GM12878 (cell line): ENCODE measurements at regions of chr14 and their contacts with region 1.

Region 1: DNA sequence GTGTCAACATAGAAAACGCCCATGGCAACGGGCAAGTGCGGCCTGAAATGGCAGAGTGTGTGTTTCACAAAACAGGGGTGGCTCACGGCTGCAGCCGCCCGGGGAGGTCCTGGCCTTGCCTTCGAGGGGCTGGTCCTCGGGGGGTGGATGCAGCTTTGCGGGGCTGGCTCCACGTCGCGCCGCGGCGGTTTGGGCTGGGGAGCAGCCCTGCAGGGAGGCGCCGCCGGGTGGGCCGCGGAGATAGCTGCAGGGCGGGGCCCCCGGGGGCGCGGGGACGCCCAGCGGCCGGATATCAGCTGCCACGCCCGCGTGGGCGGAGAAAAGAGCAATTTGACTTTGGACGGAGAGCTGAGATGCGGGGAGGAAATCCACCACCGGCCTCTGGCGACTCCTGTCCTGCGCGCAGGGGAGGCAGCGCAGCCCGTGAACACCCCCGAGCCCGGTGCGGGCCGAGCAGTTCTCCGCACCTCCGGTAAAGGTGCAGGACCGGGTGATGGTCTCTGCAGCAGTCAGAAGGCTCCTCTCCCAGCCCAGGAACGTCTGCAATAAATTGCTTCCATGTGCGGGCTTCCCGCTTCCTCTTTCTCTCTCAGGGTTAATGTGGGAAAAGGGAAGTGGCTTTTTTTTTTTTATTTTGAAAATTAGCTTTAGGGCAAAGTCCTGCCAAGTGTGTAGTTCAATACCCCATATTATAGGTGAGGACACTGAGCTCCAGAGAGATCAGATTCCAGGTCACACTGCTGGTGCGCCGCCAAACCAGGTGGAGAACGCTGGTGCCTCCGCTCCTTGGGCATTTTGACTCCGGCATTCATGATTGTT is 110.5 kb downstream of the ARF6 start:
- DNase-seq: peak; percentile 60
- ATAC-seq: peak; percentile 52
- H3K4me3 ChIP-seq: peak overlapping the region; percentile 61
- H3K27ac ChIP-seq: peak overlapping the region; percentile 99
- H3K4me1 ChIP-seq: peaks cover 44% of the 10 kb centered on the region
- H3K27me3 ChIP-seq: no peaks in the 10 kb centered on the region
- CTCF ChIP-seq: peak; percentile 11 to 30 (median 19); a peak in 3 of 6 replicates
- EP300 ChIP-seq: peak in 1 of 2 experiments; percentile 5; a peak in 3 of 4 replicates
- POLR2A ChIP-seq: peak; percentile 85
- RAD21 ChIP-seq: 0 out of 2 replicates have a peak, but pooled peaks have one; percentile 31

Region 2: GRCh38 chr14:49867831-49868723 is 135.3 kb before region 1 on chr14:
- CTCF ChIA-PET with region 1: interaction called, 82 read pairs
- POLR2A ChIA-PET with region 1: interaction called, 60 read pairs
- RAD21 ChIA-PET with region 1: interaction called, 80 read pairs
- SMC1A ChIA-PET with region 1: interaction called, 48 read pairs
- in situ Hi-C with region 1: no loop called
- intact Hi-C with region 1: loop called (anchors 2 kb)
- DNase-seq: peak; percentile 92
- ATAC-seq: peak; percentile 89
- H3K4me3 ChIP-seq: peak overlapping the region; percentile 89
- H3K27ac ChIP-seq: peak overlapping the region; percentile 93
- H3K4me1 ChIP-seq: peaks cover 20% of the 10 kb centered on the region
- H3K27me3 ChIP-seq: no peaks in the 10 kb centered on the region
- CTCF ChIP-seq: no peak
- EP300 ChIP-seq: no peak
- POLR2A ChIP-seq: peak; percentile 83
- RAD21 ChIP-seq: no peak

Region 3: DNA sequence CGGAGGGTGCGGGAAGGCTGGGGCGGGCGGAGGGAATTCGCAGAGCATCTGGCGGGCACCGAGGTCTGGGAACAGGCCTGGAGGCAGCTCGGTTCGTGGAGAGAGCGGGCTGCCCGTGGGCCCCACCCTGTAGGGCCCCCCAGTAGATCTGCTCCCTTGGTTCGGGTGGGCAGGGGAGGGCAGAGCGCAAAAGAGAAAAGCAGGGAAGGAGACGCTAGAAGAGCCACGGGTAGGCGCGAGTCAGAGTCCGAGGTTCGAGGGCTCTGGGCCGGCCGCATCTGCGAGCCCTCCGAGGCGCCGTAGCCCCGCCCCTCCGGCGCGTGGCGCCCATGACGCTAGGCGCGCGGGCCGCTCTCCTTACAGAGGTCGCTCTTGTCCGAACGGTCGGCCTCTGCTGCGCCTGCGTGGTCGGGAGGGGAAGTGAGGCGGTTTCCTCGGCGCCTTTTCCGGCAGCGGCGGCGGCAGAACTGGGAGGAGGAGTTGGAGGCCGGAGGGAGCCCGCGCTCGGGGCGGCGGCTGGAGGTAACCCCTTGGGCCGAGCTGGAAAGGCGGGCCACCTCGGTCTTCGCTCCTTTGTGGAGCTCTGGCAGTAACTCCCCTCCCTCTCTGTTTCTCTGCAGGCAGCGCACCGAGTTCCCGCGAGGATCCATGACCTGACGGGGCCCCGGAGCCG is 110.7 kb before region 1 on chr14 and contains the start of gene ARF6:
- CTCF ChIA-PET with region 1: interaction called, 11 read pairs
- POLR2A ChIA-PET with region 1: interaction called, 10 read pairs
- RAD21 ChIA-PET with region 1: interaction called, 26 read pairs
- SMC1A ChIA-PET with region 1: interaction called, 18 read pairs
- in situ Hi-C with region 1: no loop called
- intact Hi-C with region 1: loop called (anchors 1 kb)
- DNase-seq: peak; percentile 81
- ATAC-seq: peak; percentile 83
- H3K4me3 ChIP-seq: peak within 1 kb of the TSS; percentile 97
- H3K27ac ChIP-seq: peak within 1 kb of the TSS; percentile 100
- H3K4me1 ChIP-seq: peaks cover 5% of the 10 kb centered on the region
- H3K27me3 ChIP-seq: no peaks in the 10 kb centered on the region
- CTCF ChIP-seq: peak in 2 of 3 experiments; percentile 15 to 29; a peak in 1 of 6 replicates
- EP300 ChIP-seq: no peak
- POLR2A ChIP-seq: peak; percentile 92
- RAD21 ChIP-seq: 0 out of 2 replicates have a peak, but pooled peaks have one; percentile 10
- polyA plus RNA-seq, gene ARF6: 46.8 to 86.6 TPM

Region 4: GRCh38 chr14:49959822-49960408 is 43.5 kb before region 1 on chr14:
- CTCF ChIA-PET with region 1: interaction called, 8 read pairs
- POLR2A ChIA-PET with region 1: interaction called, 17 read pairs
- RAD21 ChIA-PET with region 1: interaction called, 35 read pairs
- SMC1A ChIA-PET with region 1: interaction called, 50 read pairs
- in situ Hi-C with region 1: no loop called
- intact Hi-C with region 1: loop called (anchors 5 kb)
- DNase-seq: peak; percentile 76
- ATAC-seq: peak; percentile 82
- H3K4me3 ChIP-seq: 0 out of 2 replicates have a peak overlapping the region, but pooled peaks have one; percentile 41
- H3K27ac ChIP-seq: peak overlapping the region; percentile 78
- H3K4me1 ChIP-seq: peaks cover 42% of the 10 kb centered on the region
- H3K27me3 ChIP-seq: no peaks in the 10 kb centered on the region
- CTCF ChIP-seq: no peak
- EP300 ChIP-seq: no peak
- POLR2A ChIP-seq: no peak
- RAD21 ChIP-seq: 0 out of 2 replicates have a peak, but pooled peaks have one; percentile 23

Region 5: GRCh38 chr14:49977126-49977841 is 26.1 kb before region 1 on chr14:
- CTCF ChIA-PET with region 1: interaction called, 41 read pairs
- POLR2A ChIA-PET with region 1: interaction called, 119 read pairs
- RAD21 ChIA-PET with region 1: interaction called, 107 read pairs
- SMC1A ChIA-PET with region 1: interaction called, 133 read pairs
- in situ Hi-C with region 1: no loop called
- intact Hi-C with region 1: no loop called
- DNase-seq: no peak
- ATAC-seq: peak; percentile 91
- H3K4me3 ChIP-seq: peak overlapping the region; percentile 7; the same call in 1 of the 2 replicates
- H3K27ac ChIP-seq: peak overlapping the region; percentile 77
- H3K4me1 ChIP-seq: peaks cover 33% of the 10 kb centered on the region
- H3K27me3 ChIP-seq: no peaks in the 10 kb centered on the region
- CTCF ChIP-seq: no peak
- EP300 ChIP-seq: no peak
- POLR2A ChIP-seq: peak; percentile 58
- RAD21 ChIP-seq: 0 out of 2 replicates have a peak, but pooled peaks have one; percentile 7

Region 6: DNA sequence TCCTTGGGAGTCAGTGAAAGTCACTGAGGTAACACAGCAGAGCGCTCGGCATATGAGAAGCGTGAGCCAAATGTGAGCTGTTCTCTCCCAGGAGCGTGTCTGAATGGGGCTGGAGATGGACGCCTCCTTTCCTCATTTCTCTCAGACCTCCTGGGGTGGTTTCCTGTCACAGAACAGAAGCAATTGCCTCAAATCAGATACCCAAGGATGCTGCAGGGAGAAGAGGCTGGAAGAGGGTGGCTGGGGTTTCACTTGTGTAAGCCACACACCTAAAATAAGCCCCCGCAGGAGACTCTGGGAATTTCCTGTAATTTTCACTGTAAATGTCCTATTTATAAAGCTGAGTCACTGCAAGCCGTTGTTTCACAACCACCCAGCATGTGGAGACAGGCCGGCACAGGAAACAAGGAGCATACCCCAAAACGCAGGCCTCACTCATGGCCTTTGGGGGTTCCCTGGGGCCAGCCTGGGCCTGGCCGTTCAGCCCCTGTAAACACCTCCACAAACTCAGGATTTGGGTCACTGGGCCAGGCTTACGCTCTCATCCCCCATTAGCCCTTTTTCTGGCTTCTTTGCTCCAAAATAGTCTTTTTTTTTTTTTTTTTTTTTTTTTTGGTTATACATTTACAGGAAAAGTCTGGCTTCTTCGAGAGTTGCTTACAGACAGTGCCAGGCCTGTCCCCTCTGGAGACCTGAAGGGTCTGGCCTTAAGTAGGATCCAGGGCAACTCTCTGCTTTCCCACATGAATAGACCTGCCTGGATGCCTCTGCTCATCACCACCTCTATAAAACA is 57.6 kb after region 1 on chr14:
- CTCF ChIA-PET with region 1: interaction called, 14 read pairs
- POLR2A ChIA-PET with region 1: interaction called, 48 read pairs
- RAD21 ChIA-PET with region 1: interaction called, 60 read pairs
- SMC1A ChIA-PET with region 1: interaction called, 54 read pairs
- in situ Hi-C with region 1: no loop called
- intact Hi-C with region 1: loop called (anchors 1 kb)
- DNase-seq: no peak
- ATAC-seq: peak; percentile 51
- H3K4me3 ChIP-seq: 0 out of 2 replicates have a peak overlapping the region, but pooled peaks have one; percentile 25
- H3K27ac ChIP-seq: peak overlapping the region; percentile 98
- H3K4me1 ChIP-seq: peaks cover 53% of the 10 kb centered on the region
- H3K27me3 ChIP-seq: no peaks in the 10 kb centered on the region
- CTCF ChIP-seq: no peak
- EP300 ChIP-seq: peak in 1 of 2 experiments; percentile 66; a peak in 2 of 4 replicates
- POLR2A ChIP-seq: no peak
- RAD21 ChIP-seq: peak; percentile 32; the same call in 1 of the 2 replicates

Region 7: DNA sequence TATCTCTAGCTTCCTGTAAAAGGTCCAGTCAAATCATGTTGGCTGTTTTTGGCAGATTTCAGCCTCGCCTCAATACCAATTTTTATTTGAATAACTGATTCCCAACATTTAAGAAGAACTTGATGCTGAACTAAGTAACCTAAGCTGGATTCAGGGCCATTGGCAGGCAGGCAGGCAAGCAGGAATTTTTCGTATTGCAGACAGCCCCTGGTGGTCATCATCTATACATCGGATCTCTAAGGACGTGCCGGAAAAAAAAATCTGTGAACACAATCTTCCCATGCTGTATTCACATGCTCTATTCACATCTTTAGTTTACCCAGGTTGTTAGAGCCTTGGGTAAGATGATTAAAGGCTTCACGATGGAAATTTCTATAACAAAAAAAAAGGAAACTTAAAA is 105.9 kb after region 1 on chr14:
- CTCF ChIA-PET with region 1: interaction called, 7 read pairs
- POLR2A ChIA-PET with region 1: no interaction called
- RAD21 ChIA-PET with region 1: interaction called, 5 read pairs
- SMC1A ChIA-PET with region 1: interaction called, 3 read pairs
- in situ Hi-C with region 1: no loop called
- intact Hi-C with region 1: loop called (anchors 1 kb)
- DNase-seq: no peak
- ATAC-seq: no peak
- H3K4me3 ChIP-seq: no peak overlapping the region
- H3K27ac ChIP-seq: no peak overlapping the region
- H3K4me1 ChIP-seq: peaks cover 18% of the 10 kb centered on the region
- H3K27me3 ChIP-seq: no peaks in the 10 kb centered on the region
- CTCF ChIP-seq: no peak
- EP300 ChIP-seq: no peak
- POLR2A ChIP-seq: no peak
- RAD21 ChIP-seq: no peak

Region 8: GRCh38 chr14:50383618-50384225 is 380.3 kb after region 1 on chr14:
- CTCF ChIA-PET with region 1: no interaction called
- POLR2A ChIA-PET with region 1: no interaction called
- RAD21 ChIA-PET with region 1: no interaction called
- SMC1A ChIA-PET with region 1: no interaction called
- in situ Hi-C with region 1: no loop called
- intact Hi-C with region 1: no loop called
- DNase-seq: no peak
- ATAC-seq: no peak
- H3K4me3 ChIP-seq: no peak overlapping the region
- H3K27ac ChIP-seq: no peak overlapping the region
- H3K4me1 ChIP-seq: no peaks in the 10 kb centered on the region
- H3K27me3 ChIP-seq: no peaks in the 10 kb centered on the region
- CTCF ChIP-seq: no peak
- EP300 ChIP-seq: no peak
- POLR2A ChIP-seq: no peak
- RAD21 ChIP-seq: no peak